ENCODE measurements at regions of chr4 and their contacts with region 1.

Region 1: DNA sequence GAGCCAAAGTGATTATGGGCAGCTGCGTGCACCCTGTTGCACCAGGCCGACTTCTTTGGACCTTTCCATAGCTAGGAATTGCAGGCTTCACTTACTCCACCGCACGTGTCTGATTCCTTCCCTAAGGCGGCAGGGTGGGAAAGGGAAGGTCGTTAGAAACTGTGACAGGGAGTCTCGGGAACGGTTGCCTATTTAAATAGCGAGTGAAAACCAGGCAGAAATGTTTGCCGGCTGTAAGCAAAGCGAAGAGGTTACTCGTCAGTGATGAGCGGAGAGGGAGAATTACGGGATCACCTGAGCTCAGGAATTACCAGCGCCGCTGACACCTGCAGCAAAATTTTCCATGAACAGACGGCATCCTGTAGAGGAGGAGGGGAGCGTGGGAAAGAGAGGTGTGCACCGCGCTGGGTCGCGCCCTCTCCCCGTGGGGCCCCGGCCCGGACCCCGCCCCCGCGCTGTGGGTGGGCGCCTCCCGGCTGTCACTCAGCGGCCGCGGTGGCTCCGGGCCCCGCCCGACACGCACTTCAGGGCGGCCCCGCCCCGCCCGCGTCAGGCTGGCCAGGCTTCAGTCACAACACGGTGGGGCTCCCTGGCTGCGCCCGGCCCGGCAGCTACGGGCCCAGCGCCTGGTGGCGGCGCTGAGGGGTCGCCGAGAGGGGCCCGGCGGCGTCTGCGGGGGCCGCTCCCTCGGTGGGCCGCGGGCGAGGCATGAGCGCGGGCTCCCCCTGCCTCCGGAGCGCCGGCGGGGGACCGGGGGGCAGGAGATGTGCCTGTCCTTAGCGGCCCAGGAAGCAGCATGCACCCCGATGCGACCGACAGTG is at the start of gene SNX25:
- DNase-seq: peak; percentile 94
- ATAC-seq: peak; percentile 83
- H3K4me3 Mint-ChIP-seq: peak within 1 kb of the TSS; percentile 95
- H3K27ac Mint-ChIP-seq: peak within 1 kb of the TSS; percentile 94
- H3K4me1 Mint-ChIP-seq: peaks cover 63% of the 10 kb centered on the region
- H3K27me3 Mint-ChIP-seq: no peaks in the 10 kb centered on the region
- CTCF ChIP-seq: no peak
- total RNA-seq, gene SNX25: 53.1 and 53.7 TPM in 2 replicates

Region 2: DNA sequence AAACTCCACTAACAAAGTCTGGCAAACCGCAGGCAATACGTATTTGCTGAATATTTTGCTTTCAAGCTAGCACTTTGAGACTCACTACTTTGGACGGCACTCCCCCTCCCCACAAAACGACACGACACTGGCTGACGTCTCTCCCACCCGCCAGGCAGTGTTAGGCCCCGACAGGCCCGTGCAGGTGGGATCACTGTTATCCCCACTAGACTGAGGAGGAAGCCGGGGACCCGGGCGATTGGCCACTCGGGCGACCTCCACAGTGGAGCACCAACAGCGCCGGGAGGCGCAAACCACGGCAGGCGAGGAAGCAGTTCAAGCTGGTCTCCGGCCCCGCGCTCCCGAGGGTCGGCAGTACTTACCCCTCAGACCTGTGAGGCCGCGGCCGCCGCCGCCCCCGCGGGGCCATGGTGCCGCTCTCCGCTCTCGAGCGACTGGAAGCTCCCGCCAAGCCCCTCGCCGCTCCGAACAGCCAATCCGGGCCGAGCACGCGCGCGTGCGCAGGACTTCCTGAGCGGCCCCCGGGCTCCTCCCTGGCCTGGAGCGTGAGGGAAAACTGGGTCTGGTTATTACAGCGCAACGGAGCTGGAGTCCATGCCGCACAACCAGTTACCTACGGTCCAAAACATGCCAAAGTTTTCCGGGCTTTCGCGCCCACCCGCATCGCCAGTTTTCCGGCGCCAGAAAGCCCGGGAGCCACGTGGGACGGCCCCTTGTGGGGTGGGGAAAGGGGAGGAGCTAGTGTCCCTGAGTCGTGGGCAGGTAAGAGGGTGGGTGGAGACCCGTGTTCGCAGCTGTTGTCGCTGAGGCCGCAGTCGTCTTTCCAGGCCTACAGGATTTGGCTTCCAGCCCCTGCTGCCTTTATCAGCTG is 475.4 kb before region 1 on chr4 and contains the start of gene CENPU:
- CTCF ChIA-PET with region 1: no interaction called
- POLR2A ChIA-PET with region 1: interaction called, 4 read pairs
- intact Hi-C with region 1: loop called (anchors 5 kb)
- DNase-seq: peak; percentile 95
- ATAC-seq: peak; percentile 96
- H3K4me3 Mint-ChIP-seq: peak within 1 kb of the TSS; percentile 88
- H3K27ac Mint-ChIP-seq: peak within 1 kb of the TSS; percentile 85
- H3K4me1 Mint-ChIP-seq: peaks cover 19% of the 10 kb centered on the region
- H3K27me3 Mint-ChIP-seq: no peaks in the 10 kb centered on the region
- CTCF ChIP-seq: no peak
- total RNA-seq, gene CENPU: 7.0 and 7.1 TPM in 2 replicates

Region 3: GRCh38 chr4:185165605-185166063 is 43.6 kb before region 1 on chr4:
- CTCF ChIA-PET with region 1: no interaction called
- POLR2A ChIA-PET with region 1: no interaction called
- intact Hi-C with region 1: no loop called
- DNase-seq: no peak
- ATAC-seq: no peak
- H3K4me3 Mint-ChIP-seq: no peak overlapping the region
- H3K27ac Mint-ChIP-seq: no peak overlapping the region
- H3K4me1 Mint-ChIP-seq: peaks cover 8% of the 10 kb centered on the region
- H3K27me3 Mint-ChIP-seq: no peaks in the 10 kb centered on the region
- CTCF ChIP-seq: no peak

Region 4: GRCh38 chr4:185219551-185220344 is 10.5 kb after region 1 on chr4:
- CTCF ChIA-PET with region 1: no interaction called
- POLR2A ChIA-PET with region 1: interaction called, 15 read pairs
- intact Hi-C with region 1: no loop called
- DNase-seq: no peak
- ATAC-seq: peak; percentile 82
- H3K4me3 Mint-ChIP-seq: peak overlapping the region; percentile 74
- H3K27ac Mint-ChIP-seq: peak overlapping the region; percentile 87
- H3K4me1 Mint-ChIP-seq: peaks cover 79% of the 10 kb centered on the region
- H3K27me3 Mint-ChIP-seq: no peaks in the 10 kb centered on the region
- CTCF ChIP-seq: no peak

Region 5: GRCh38 chr4:185244763-185245162 is 35.5 kb after region 1 on chr4:
- CTCF ChIA-PET with region 1: no interaction called
- POLR2A ChIA-PET with region 1: interaction called, 6 read pairs
- intact Hi-C with region 1: loop called (anchors 5 kb)
- DNase-seq: no peak
- ATAC-seq: no peak
- H3K4me3 Mint-ChIP-seq: no peak overlapping the region
- H3K27ac Mint-ChIP-seq: no peak overlapping the region
- H3K4me1 Mint-ChIP-seq: peaks cover 32% of the 10 kb centered on the region
- H3K27me3 Mint-ChIP-seq: no peaks in the 10 kb centered on the region
- CTCF ChIP-seq: no peak

Region 6: DNA sequence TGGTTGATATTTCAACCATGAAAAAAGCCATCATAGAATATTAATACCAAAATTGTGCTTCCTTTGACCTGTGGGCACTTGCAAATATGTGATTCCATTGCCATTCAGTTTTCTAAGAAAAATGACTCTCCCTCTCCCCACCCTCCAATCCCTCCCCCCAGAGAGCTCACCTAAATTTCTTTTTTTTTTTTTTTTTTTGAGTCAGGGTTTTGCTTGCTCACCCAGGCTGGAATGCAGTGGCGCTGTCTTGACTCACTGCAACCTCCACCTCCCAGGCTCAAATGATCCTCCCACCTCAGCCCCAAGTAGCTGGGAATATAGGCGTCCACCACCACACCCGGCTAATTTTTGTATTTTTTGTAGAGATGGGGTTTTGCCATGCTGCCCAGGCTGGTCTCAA is 47.2 kb after region 1 on chr4:
- CTCF ChIA-PET with region 1: no interaction called
- POLR2A ChIA-PET with region 1: no interaction called
- intact Hi-C with region 1: loop called (anchors 2 kb)
- DNase-seq: no peak
- ATAC-seq: no peak
- H3K4me3 Mint-ChIP-seq: no peak overlapping the region
- H3K27ac Mint-ChIP-seq: no peak overlapping the region
- H3K4me1 Mint-ChIP-seq: peaks cover 44% of the 10 kb centered on the region
- H3K27me3 Mint-ChIP-seq: no peaks in the 10 kb centered on the region
- CTCF ChIP-seq: no peak

Region 7: DNA sequence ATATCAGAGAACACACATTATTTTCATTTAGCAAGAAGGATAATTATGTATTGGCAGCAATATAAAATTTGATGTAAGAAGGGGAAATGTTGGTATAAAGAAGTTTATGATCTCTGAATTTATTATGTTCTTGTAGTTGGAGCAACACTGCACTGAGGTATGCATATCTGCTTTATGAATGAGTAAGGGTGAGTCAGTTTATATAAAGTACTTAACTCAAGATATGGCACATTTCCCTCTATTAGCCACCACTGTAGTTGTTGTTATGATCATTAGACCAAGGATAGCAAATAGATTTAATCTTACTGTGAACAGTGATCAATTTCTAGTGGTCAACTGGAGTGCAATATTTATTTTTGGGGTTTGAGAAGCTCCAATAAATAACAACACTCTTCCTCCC is 66.8 kb after region 1 on chr4:
- CTCF ChIA-PET with region 1: no interaction called
- POLR2A ChIA-PET with region 1: no interaction called
- intact Hi-C with region 1: no loop called
- DNase-seq: no peak
- ATAC-seq: no peak
- H3K4me3 Mint-ChIP-seq: no peak overlapping the region
- H3K27ac Mint-ChIP-seq: no peak overlapping the region
- H3K4me1 Mint-ChIP-seq: peaks cover 30% of the 10 kb centered on the region
- H3K27me3 Mint-ChIP-seq: no peaks in the 10 kb centered on the region
- CTCF ChIP-seq: no peak

Region 8: DNA sequence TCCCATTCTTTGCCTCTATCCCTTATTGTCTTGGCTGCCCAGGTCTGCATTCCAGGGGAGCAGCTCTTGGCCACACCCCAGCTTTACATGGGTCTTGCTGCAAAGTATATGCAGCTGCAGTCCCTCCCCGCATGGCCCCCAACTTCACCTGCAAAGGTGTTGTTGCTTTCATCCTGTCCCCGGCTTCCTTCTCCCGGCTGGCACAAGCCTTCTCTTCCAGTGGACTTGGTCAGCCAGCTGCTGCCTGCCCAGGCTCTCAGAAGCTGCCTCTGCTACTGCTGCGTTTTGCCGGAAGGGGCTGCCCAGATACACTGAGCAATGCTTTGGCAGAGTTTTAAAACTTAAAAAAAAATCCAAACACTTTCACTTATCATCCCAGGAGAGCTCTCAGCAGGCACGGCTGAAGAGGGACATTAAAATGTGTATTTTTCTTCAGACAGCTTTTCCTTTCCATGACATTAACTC is 447.3 kb after region 1 on chr4:
- CTCF ChIA-PET with region 1: no interaction called
- POLR2A ChIA-PET with region 1: no interaction called
- intact Hi-C with region 1: no loop called
- DNase-seq: no peak
- ATAC-seq: no peak
- H3K4me3 Mint-ChIP-seq: no peak overlapping the region
- H3K27ac Mint-ChIP-seq: no peak overlapping the region
- H3K4me1 Mint-ChIP-seq: no peaks in the 10 kb centered on the region
- H3K27me3 Mint-ChIP-seq: peaks cover 2% of the 10 kb centered on the region
- CTCF ChIP-seq: no peak